HEK293 (cell line): ENCODE measurements at regions of chr1 and their contacts with region 1.

Region 1: GRCh38 chr1:115706587-115707425 is 61.7 kb downstream of the CASQ2 start:
- H3K4me3 ChIP-seq: no peak overlapping the region
- H3K27ac ChIP-seq: no peak overlapping the region
- H3K4me1 ChIP-seq: no peaks in the 10 kb centered on the region
- CTCF ChIP-seq: peak; percentile 48

Region 2: GRCh38 chr1:115430441-115431116 is 276.2 kb before region 1 on chr1:
- CTCF ChIA-PET with region 1: no interaction called
- POLR2A ChIA-PET with region 1: no interaction called
- H3K4me3 ChIP-seq: no peak overlapping the region
- H3K27ac ChIP-seq: no peak overlapping the region
- H3K4me1 ChIP-seq: no peaks in the 10 kb centered on the region; the same call in 1 of the 2 replicates
- CTCF ChIP-seq: no peak

Region 3: DNA sequence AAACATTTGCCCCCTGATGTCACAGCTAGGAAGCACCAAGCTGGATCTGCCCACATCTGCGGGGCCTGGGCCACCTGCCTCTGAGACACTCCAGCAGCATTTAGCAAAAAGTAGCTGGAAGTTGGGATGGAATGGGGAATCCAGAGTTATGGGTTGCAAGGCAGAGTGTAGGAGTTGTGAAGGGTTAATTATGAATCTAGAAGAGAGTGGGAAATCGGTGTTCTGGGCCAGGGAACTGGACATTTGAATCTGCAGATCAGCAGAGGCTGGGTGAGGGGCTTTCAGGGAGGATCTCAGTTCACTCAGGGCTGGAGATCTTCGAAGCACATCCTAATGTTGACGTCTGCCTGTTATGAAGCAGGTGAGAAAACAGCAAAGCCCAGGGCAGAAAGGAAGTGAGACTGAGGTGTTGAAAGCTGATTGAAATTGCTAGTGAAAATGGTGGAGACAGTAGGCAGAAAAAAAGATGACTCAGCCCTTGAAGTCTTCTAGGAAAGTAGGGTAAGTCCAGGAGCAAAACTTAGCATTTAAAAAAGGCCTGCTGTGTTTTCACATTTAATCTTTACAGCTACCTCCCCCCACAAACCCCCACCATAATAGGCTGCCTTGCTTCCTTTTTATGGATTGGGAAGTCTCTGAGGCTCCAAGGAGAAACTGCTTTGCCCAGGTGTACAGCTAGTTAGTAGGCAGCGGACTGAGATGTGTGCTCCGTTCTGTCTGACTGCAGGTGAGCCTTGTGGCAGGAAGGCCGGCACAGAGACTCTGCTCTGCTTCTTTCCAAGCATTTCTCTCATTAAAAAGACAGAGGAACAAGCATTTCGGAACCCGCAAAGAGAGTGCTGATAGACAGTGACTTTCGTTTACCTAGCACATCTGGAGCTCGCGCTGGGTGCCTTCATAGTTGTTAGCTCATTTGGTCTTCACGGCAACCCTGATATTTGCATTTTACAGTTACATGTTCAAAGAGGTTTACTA is 57.8 kb before region 1 on chr1:
- CTCF ChIA-PET with region 1: interaction called, 18 read pairs
- POLR2A ChIA-PET with region 1: no interaction called
- H3K4me3 ChIP-seq: no peak overlapping the region
- H3K27ac ChIP-seq: peak overlapping the region; percentile 36; the same call in 1 of the 2 replicates
- H3K4me1 ChIP-seq: peaks cover 35% of the 10 kb centered on the region
- CTCF ChIP-seq: no peak

Region 4: DNA sequence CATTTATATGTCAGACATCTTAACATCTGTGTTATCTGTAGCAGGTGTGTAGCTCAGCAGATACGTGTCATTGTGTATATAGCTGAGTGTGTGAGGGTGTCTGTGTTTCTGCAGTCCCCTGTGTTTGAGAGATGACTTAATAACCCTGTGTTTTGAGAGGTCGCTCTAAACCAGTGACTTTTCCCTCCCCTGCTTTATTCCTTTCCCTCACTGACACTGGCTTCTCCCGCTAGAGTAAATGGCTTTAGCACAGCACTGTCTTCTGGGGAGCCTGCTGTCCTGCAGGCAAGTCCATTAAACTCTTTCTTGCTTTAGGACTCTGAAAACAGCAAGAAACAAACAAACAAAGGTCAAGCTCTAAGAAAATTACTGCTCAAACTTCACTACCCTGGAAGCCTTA is 12.0 kb before region 1 on chr1:
- CTCF ChIA-PET with region 1: interaction called, 15 read pairs
- POLR2A ChIA-PET with region 1: no interaction called
- H3K4me3 ChIP-seq: no peak overlapping the region
- H3K27ac ChIP-seq: no peak overlapping the region
- H3K4me1 ChIP-seq: no peaks in the 10 kb centered on the region
- CTCF ChIP-seq: no peak

Region 5: DNA sequence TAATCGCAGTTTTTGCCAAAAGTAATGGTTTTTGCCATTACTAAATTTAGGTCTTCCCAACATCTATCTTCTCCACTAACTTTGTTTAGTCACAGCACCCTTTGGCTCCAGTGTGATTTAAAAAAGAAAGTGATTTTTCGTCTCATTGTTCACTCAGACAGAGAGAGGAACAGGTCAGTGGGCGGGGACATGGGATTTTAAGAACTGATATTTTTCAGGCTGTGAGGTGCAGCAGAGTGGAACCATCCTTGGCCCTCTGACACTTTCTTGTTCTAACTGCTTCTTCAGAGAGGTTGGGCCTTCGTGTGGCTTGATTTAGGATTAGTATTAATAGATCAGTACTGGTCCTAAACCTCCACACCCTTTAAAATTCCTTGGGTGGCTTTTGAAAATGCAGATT is 22.9 kb after region 1 on chr1:
- CTCF ChIA-PET with region 1: interaction called, 22 read pairs
- POLR2A ChIA-PET with region 1: no interaction called
- H3K4me3 ChIP-seq: no peak overlapping the region
- H3K27ac ChIP-seq: no peak overlapping the region
- H3K4me1 ChIP-seq: no peaks in the 10 kb centered on the region
- CTCF ChIP-seq: no peak

Region 6: DNA sequence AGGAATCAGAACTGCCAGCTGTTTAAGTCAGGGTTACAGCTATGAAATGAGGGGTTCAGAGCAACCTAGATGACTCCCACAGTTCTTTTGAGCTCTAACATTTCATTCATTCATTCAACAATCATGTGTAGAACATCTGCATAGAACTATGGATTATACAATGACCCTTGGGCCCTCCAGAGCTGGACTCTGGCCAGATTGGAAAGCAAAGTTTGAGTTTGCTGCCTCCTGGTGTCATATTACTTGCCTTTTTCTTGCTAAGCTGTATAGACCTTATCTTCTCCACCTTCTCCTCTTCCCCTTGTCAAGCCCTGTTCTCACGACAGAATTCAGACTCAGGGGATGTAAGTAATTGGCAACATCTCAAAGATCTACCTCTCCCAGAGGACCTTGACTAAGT is 57.7 kb after region 1 on chr1:
- CTCF ChIA-PET with region 1: interaction called, 35 read pairs
- POLR2A ChIA-PET with region 1: no interaction called
- H3K4me3 ChIP-seq: no peak overlapping the region
- H3K27ac ChIP-seq: no peak overlapping the region
- H3K4me1 ChIP-seq: no peaks in the 10 kb centered on the region
- CTCF ChIP-seq: 0 out of 2 replicates have a peak, but pooled peaks have one; percentile 30